MCF 10A (cell line): ENCODE measurements at regions of chr7 and their contacts with region 1.

Region 1: DNA sequence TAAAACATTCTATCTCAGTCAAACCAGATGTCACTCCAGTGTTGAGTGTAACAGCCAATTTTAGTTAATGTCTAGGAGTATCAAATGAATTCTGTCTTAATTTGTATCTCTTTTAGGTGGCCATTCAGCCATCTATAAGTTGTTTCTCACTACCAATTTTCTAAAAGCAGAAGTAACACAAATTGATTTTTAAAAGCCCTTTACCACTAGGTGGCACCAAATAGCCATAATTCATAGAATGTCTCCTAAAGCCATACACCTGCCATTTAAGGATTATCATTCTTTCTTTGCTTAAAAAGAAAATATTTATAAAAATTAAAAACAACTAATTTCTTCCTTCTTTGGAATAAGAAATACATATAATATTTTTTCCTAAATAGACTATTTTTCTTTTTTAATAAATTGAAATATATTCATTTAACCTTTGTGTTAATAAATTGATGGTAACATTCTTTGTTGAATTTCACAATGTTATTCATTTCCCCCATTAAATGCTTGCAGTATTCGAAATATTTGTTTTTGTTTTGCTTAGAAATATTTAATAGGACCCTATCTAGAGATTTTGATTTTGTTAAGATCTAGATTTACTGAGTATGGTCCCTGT is 107.8 kb upstream of the PPP1R3A start:
- DNase-seq: peak; percentile 77
- H3K4me3 Mint-ChIP-seq: no peak overlapping the region
- H3K27ac Mint-ChIP-seq: no peak overlapping the region
- H3K4me1 Mint-ChIP-seq: no peaks in the 10 kb centered on the region
- H3K27me3 Mint-ChIP-seq: peaks cover 78% of the 10 kb centered on the region
- CTCF ChIP-seq: peak; percentile 38

Region 2: DNA sequence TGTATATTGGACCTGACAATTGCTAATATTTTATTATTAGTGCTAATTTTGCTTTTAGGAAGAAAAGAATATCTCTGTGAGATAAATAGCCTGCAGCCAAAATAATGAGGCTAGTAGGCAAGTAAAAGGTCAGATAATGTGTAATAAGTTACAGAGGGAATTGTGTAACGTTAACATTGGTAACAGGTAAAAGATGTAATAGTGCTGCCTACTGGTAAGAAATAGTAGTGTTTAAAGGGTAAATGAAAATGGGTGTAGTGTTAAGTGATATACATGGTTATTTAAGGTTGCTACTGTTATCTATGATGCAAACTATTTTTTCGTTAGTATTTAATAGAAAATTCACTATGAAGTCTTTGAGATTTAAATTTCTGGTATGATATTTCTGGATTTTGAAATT is 378.8 kb after region 1 on chr7:
- CTCF ChIA-PET with region 1: no interaction called
- POLR2A ChIA-PET with region 1: no interaction called
- intact Hi-C with region 1: loop called (anchors 2 kb)
- DNase-seq: peak; percentile 30
- H3K4me3 Mint-ChIP-seq: no peak overlapping the region
- H3K27ac Mint-ChIP-seq: no peak overlapping the region
- H3K4me1 Mint-ChIP-seq: no peaks in the 10 kb centered on the region
- H3K27me3 Mint-ChIP-seq: peaks cover 63% of the 10 kb centered on the region
- CTCF ChIP-seq: peak; percentile 36